Activated CD4-positive, alpha-beta T cell treated with anti-CD3 and anti-CD28 coated beads, Interleukin-2, amount 10 ng/mL, durations not matched to agents 24 days and 14 days (primary cell): ENCODE measurements at regions of chr13 and their contacts with region 1.

Region 1: DNA sequence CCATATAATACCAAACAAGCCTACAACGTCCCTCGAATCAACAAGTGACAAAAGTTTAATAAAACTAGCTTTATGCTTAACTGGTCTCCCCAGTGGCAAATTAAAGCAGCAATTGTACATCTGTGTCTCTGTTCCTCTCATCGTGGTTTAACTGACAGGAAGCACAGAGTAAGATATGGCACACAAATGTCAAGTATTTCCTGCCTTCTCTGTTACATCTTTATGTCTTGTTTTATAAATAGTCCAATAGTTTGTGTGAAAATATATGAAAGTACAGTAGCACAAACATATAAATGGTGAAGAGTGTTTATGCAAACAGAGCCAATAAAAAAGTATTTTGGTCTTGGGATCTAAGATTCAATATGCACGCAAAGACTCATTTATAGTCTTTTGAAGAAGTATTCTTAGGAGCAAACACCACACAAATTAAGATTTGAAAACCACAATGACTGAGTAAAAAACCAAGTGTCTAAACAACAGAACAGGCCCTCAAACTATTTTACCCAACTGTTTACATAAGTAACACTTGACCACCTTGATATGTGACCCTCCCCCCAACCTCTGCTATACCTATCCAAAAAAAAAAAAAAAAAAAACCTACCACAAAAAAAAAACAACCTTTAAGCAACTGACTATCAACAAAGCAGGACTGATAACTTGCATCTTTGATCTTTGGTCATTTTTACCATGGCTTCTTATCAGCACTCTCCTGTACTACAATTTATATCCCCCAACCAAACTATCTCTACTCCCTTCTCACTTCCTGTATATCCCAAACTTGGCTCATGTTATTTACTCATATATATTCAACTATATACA is 14.0 kb downstream of the ELF1 start:
- DNase-seq: peak; percentile 82
- H3K4me3 Mint-ChIP-seq: peak overlapping the region; percentile 74
- H3K27ac Mint-ChIP-seq: peak overlapping the region; percentile 84
- H3K4me1 Mint-ChIP-seq: peaks cover 54% of the 10 kb centered on the region
- H3K27me3 Mint-ChIP-seq: no peaks in the 10 kb centered on the region

Region 2: GRCh38 chr13:39578821-39579291 is 1426.2 kb before region 1 on chr13:
- intact Hi-C with region 1: no loop called
- DNase-seq: no peak
- H3K4me3 Mint-ChIP-seq: no peak overlapping the region
- H3K27ac Mint-ChIP-seq: no peak overlapping the region
- H3K4me1 Mint-ChIP-seq: no peaks in the 10 kb centered on the region
- H3K27me3 Mint-ChIP-seq: peaks cover 1% of the 10 kb centered on the region

Region 3: DNA sequence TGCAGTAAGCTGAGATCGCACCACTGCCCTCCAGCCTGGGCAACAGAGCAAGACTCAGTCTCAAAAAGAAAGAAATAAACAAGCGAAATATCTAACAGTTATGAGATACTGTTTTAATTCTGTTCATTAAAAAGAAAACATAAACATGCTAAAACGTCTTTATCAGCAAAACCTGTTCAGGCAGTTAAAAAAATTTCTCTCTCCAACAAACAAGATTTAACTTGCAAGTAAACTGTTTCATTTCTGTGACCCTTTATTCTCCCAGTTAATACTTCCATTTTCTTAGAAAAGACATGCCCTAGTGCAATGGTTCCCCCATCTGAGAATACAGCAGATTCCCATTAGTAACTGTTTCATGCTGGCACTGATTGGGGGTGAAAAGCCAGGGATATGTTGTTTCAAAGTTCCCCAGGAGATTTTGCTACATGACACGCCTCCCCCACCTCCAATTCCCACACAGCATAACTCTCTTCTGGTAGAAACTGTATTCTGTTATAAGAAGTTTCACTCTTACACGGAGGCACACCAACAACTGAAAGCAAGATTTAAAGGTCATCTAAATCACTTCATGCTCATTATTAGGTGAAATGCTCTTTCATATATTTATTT is 10.4 kb before region 1 on chr13:
- intact Hi-C with region 1: loop called (anchors 1 kb)
- DNase-seq: no peak
- H3K4me3 Mint-ChIP-seq: peak overlapping the region; percentile 69
- H3K27ac Mint-ChIP-seq: peak overlapping the region; percentile 79
- H3K4me1 Mint-ChIP-seq: peaks cover 67% of the 10 kb centered on the region
- H3K27me3 Mint-ChIP-seq: no peaks in the 10 kb centered on the region

Region 4: DNA sequence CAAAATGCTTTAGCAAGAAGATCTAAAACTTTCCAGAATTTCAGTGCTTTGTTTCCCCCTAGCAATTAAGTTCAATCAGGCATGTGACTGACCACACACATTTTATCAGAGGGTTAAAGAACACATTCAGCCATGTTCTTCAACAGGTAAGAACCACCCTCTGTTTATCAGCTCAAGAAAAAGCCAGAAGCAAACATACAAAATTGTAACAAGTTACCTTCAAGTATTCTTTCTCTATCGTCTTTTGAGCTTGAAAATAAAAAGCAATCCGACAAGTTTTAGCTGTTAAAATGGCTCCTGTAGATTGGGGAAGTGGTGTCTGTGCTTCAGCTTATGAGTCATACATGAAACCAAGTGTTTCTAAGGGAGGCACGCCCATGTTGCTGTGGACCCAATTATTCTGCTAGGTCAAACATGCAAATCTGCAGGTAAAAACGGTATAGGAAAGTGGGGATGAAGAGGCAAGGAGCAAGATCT is 14.0 kb after region 1 on chr13 and contains the start of gene ELF1:
- intact Hi-C with region 1: loop called (anchors 1 kb)
- DNase-seq: peak; percentile 89
- H3K4me3 Mint-ChIP-seq: peak within 1 kb of the TSS; percentile 95
- H3K27ac Mint-ChIP-seq: peak within 1 kb of the TSS; percentile 98
- H3K4me1 Mint-ChIP-seq: peaks cover 40% of the 10 kb centered on the region
- H3K27me3 Mint-ChIP-seq: no peaks in the 10 kb centered on the region
- total RNA-seq, gene ELF1: 65.0 and 65.8 TPM in 2 replicates

Region 5: DNA sequence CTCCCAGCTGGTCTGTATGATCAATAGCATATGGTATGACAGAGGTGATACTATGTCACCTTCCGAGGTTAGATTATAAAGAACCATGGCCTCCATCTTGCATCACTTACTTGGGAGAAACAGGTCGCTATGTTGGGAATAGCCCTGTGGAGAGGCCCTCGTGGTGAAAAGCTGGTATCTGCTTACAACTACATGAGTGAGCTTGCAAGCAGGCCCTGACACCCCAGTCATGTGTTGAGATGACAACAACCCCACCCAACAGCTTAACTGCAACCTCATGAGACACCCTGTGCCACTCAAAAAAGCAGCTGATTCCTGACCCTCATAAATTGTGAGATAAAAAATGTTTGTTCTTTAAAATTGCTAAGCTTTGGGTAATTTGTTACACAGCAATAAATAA is 239.5 kb after region 1 on chr13:
- intact Hi-C with region 1: no loop called
- DNase-seq: no peak
- H3K4me3 Mint-ChIP-seq: no peak overlapping the region
- H3K27ac Mint-ChIP-seq: no peak overlapping the region
- H3K4me1 Mint-ChIP-seq: no peaks in the 10 kb centered on the region
- H3K27me3 Mint-ChIP-seq: no peaks in the 10 kb centered on the region